WTC11 (cell line): ENCODE measurements at regions of chr16 and their contacts with region 1.

Region 1: GRCh38 chr16:57576429-57576870 is 34.0 kb downstream of the ADGRG5 start:
- DNase-seq: peak; percentile 89
- ATAC-seq: peak; percentile 91
- H3K4me3 Mint-ChIP-seq: no peak overlapping the region
- H3K27ac Mint-ChIP-seq: no peak overlapping the region
- H3K4me1 Mint-ChIP-seq: no peaks in the 10 kb centered on the region
- H3K27me3 Mint-ChIP-seq: peaks cover 13% of the 10 kb centered on the region
- CTCF ChIP-seq: peak; percentile 95

Region 2: GRCh38 chr16:57470683-57471082 is 105.8 kb before region 1 on chr16:
- CTCF ChIA-PET with region 1: no interaction called
- POLR2A ChIA-PET with region 1: no interaction called
- DNase-seq: no peak
- ATAC-seq: no peak
- H3K4me3 Mint-ChIP-seq: no peak overlapping the region
- H3K27ac Mint-ChIP-seq: no peak overlapping the region; the same call in 1 of the 2 replicates
- H3K4me1 Mint-ChIP-seq: peaks cover 39% of the 10 kb centered on the region
- H3K27me3 Mint-ChIP-seq: no peaks in the 10 kb centered on the region
- CTCF ChIP-seq: no peak

Region 3: GRCh38 chr16:57528491-57529390 is 47.7 kb before region 1 on chr16:
- CTCF ChIA-PET with region 1: interaction called, 15 read pairs
- POLR2A ChIA-PET with region 1: no interaction called
- DNase-seq: peak; percentile 91
- ATAC-seq: peak; percentile 61
- H3K4me3 Mint-ChIP-seq: peak overlapping the region; percentile 71
- H3K27ac Mint-ChIP-seq: peak overlapping the region; percentile 77; the same call in 1 of the 2 replicates
- H3K4me1 Mint-ChIP-seq: peaks cover 55% of the 10 kb centered on the region
- H3K27me3 Mint-ChIP-seq: peaks cover 24% of the 10 kb centered on the region
- CTCF ChIP-seq: no peak

Region 4: GRCh38 chr16:57591086-57591869 is 14.8 kb after region 1 on chr16:
- CTCF ChIA-PET with region 1: interaction called, 25 read pairs
- POLR2A ChIA-PET with region 1: no interaction called
- DNase-seq: peak; percentile 83
- ATAC-seq: peak; percentile 99
- H3K4me3 Mint-ChIP-seq: no peak overlapping the region
- H3K27ac Mint-ChIP-seq: no peak overlapping the region
- H3K4me1 Mint-ChIP-seq: 0 out of 2 replicates have a peak, but pooled peaks cover 3% of the 10 kb centered on the region
- H3K27me3 Mint-ChIP-seq: peaks cover 28% of the 10 kb centered on the region
- CTCF ChIP-seq: peak; percentile 94

Region 5: DNA sequence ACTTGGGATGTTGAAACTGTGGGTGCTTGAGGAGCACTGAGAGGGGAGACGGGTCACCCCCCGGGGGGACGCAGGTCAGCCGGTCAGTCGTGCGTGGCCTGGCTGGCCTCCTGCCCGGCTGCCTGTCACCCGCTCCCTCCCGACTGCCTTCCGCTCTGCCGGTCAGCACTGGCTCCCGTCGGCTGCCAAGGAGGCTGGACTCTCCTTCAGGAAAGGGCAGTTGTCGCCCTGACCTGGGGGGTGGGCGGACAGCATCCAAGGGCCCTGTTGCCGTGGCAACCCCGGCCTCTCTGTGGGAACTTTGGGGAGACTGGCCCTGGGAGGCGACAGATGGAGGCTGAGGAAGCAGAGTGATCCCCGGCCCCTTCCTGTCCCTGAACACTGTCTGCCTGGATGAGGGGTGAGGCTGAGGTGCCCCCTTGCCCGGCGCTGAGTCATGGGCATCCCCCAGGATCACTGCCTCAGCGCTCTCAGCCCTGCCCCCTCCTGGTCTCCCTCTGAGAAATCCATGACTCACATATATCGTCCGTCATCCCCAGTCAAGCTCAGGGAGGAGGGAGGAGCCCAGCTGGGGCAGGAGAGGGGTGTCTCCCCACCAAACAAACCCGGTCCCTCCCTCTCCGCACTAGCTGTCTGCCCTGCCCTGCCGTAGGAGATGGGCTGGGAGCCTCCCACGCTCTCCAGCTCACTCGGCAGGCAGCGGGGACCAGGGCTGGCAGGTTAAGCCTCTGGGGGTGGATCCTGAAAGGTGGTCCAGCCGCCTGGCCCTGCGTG is 51.7 kb after region 1 on chr16 and contains the start of gene ADGRG1:
- CTCF ChIA-PET with region 1: interaction called, 14 read pairs
- POLR2A ChIA-PET with region 1: no interaction called
- DNase-seq: peak; percentile 54
- ATAC-seq: peak; percentile 64
- H3K4me3 Mint-ChIP-seq: peak within 1 kb of the TSS; percentile 49
- H3K27ac Mint-ChIP-seq: peak within 1 kb of the TSS; percentile 51; the same call in 1 of the 2 replicates
- H3K4me1 Mint-ChIP-seq: peaks cover 31% of the 10 kb centered on the region
- H3K27me3 Mint-ChIP-seq: no peaks in the 10 kb centered on the region; the same call in 1 of the 2 replicates
- CTCF ChIP-seq: no peak
- total RNA-seq, gene ADGRG1: 1.7 to 2.6 TPM (median 2.0 TPM) in 3 replicates

Region 6: GRCh38 chr16:57648590-57649442 is 72.4 kb after region 1 on chr16:
- CTCF ChIA-PET with region 1: interaction called, 33 read pairs
- POLR2A ChIA-PET with region 1: no interaction called
- DNase-seq: peak; percentile 87
- ATAC-seq: peak; percentile 90
- H3K4me3 Mint-ChIP-seq: no peak overlapping the region
- H3K27ac Mint-ChIP-seq: 0 out of 2 replicates have a peak overlapping the region, but pooled peaks have one; percentile 53
- H3K4me1 Mint-ChIP-seq: 0 out of 2 replicates have a peak, but pooled peaks cover 2% of the 10 kb centered on the region
- H3K27me3 Mint-ChIP-seq: no peaks in the 10 kb centered on the region; the same call in 1 of the 2 replicates
- CTCF ChIP-seq: peak; percentile 100